GM12878 (cell line): ENCODE measurements at regions of chr11 and their contacts with region 1.

Region 1: DNA sequence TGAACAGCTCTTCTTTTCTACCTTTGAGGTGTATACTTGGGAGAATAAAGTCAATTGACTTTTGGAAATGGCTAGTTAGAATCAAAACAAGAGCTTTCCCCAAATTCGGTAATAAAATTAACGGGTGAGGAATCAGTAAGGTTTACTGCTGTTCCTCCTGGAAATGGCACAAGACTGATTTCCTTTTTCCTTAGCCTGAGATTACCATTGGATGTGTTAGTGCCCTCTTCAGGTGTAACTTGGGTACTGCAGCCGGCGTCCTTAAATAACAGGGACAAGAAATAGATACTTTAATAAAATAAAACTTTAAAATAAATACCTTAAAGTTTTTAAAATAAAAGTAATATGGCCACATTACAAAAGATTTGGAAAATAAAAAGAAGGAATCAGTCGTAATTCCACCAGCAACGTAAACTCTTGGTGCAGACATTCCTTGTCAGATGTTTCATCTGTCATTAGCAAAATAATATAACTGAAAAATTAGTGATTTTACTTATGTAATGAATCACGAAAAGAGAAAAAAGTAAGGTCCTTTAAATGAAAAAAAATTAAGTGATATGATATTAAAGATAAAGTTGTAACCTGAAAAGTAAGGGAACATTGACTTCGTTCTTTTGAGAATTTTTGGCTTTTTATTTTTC is 29.7 kb downstream of the ZFTA start:
- DNase-seq: peak; percentile 19
- ATAC-seq: peak; percentile 42; the same call in 2 of the 3 replicates
- H3K4me3 ChIP-seq: no peak overlapping the region
- H3K27ac ChIP-seq: no peak overlapping the region
- H3K4me1 ChIP-seq: no peaks in the 10 kb centered on the region
- H3K27me3 ChIP-seq: no peaks in the 10 kb centered on the region
- CTCF ChIP-seq: peak; percentile 81 to 90 (median 87)
- EP300 ChIP-seq: no peak
- POLR2A ChIP-seq: no peak
- RAD21 ChIP-seq: peak; percentile 73

Region 2: DNA sequence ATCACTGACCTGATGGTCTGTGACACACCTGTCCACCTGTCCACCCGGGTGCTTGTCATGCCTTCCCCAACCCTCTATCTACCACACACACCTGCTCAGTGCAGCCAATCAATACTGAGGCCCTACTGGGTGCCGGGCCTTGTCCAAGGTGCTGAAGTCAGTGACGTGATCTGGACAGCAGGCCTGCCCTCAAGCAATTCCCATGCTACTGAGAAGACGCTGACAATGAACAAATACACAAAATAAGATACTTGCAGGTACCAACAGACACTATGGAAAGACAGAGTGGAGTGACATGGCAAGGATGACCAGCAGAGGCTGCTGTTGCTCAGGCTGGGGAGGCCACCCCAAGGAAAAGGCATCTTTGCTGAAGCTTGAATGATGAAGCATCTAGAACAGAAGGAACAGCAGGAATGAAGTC is 145.9 kb before region 1 on chr11:
- CTCF ChIA-PET with region 1: interaction called, 6 read pairs
- POLR2A ChIA-PET with region 1: no interaction called
- RAD21 ChIA-PET with region 1: interaction called, 3 read pairs
- SMC1A ChIA-PET with region 1: interaction called, 4 read pairs
- in situ Hi-C with region 1: no loop called
- intact Hi-C with region 1: loop called (anchors 5 kb)
- DNase-seq: no peak
- ATAC-seq: peak; percentile 69
- H3K4me3 ChIP-seq: no peak overlapping the region
- H3K27ac ChIP-seq: no peak overlapping the region
- H3K4me1 ChIP-seq: no peaks in the 10 kb centered on the region
- H3K27me3 ChIP-seq: no peaks in the 10 kb centered on the region
- CTCF ChIP-seq: peak; percentile 66 to 79 (median 75)
- EP300 ChIP-seq: no peak
- POLR2A ChIP-seq: no peak
- RAD21 ChIP-seq: peak; percentile 70

Region 3: DNA sequence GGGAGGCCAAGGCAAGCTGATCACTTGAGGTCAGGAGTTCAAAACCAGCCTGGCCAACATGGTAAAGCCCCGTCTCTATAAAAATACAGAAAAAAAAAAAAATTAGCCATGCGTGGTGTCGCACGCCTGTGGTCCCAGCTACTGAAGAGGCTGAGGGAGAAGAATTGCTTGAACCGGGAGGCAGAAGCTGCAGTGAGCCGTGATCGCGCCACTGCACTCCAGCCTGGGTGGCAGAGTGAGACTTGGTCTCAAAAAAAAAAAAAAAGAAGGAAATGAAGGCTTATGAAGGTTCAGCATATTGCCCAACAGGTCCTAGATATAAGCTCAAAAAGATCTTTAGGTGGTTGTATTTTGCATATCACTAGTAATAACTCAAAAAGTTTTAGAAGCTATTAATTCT is 77.9 kb before region 1 on chr11:
- CTCF ChIA-PET with region 1: interaction called, 11 read pairs
- POLR2A ChIA-PET with region 1: no interaction called
- RAD21 ChIA-PET with region 1: interaction called, 6 read pairs
- SMC1A ChIA-PET with region 1: interaction called, 9 read pairs
- in situ Hi-C with region 1: no loop called
- intact Hi-C with region 1: no loop called
- DNase-seq: no peak
- ATAC-seq: peak; percentile 57
- H3K4me3 ChIP-seq: no peak overlapping the region
- H3K27ac ChIP-seq: peak overlapping the region; percentile 14; the same call in 1 of the 2 replicates
- H3K4me1 ChIP-seq: peaks cover 5% of the 10 kb centered on the region
- H3K27me3 ChIP-seq: no peaks in the 10 kb centered on the region
- CTCF ChIP-seq: no peak
- EP300 ChIP-seq: no peak
- POLR2A ChIP-seq: no peak
- RAD21 ChIP-seq: no peak

Region 4: GRCh38 chr11:63681321-63682049 is 57.4 kb before region 1 on chr11 and contains the start of gene RTN3:
- CTCF ChIA-PET with region 1: interaction called, 11 read pairs
- POLR2A ChIA-PET with region 1: no interaction called
- RAD21 ChIA-PET with region 1: interaction called, 7 read pairs
- SMC1A ChIA-PET with region 1: interaction called, 5 read pairs
- in situ Hi-C with region 1: no loop called
- intact Hi-C with region 1: no loop called
- DNase-seq: peak; percentile 96
- ATAC-seq: peak; percentile 94
- H3K4me3 ChIP-seq: peak within 1 kb of the TSS; percentile 82
- H3K27ac ChIP-seq: peak within 1 kb of the TSS; percentile 76
- H3K4me1 ChIP-seq: peaks cover 10% of the 10 kb centered on the region
- H3K27me3 ChIP-seq: no peaks in the 10 kb centered on the region
- CTCF ChIP-seq: 0 out of 6 replicates have a peak, but pooled peaks of 1 of the 3 experiments have one; percentile 2
- EP300 ChIP-seq: no peak; a peak in 1 of 4 replicates
- POLR2A ChIP-seq: peak; percentile 90
- RAD21 ChIP-seq: no peak
- polyA plus RNA-seq, gene RTN3: 22.9 to 27.3 TPM

Region 5: GRCh38 chr11:63719977-63720376 is 18.9 kb before region 1 on chr11:
- CTCF ChIA-PET with region 1: interaction called, 30 read pairs
- POLR2A ChIA-PET with region 1: interaction called, 3 read pairs
- RAD21 ChIA-PET with region 1: no interaction called
- SMC1A ChIA-PET with region 1: interaction called, 5 read pairs
- in situ Hi-C with region 1: no loop called
- intact Hi-C with region 1: no loop called
- DNase-seq: no peak
- ATAC-seq: no peak
- H3K4me3 ChIP-seq: no peak overlapping the region
- H3K27ac ChIP-seq: no peak overlapping the region
- H3K4me1 ChIP-seq: no peaks in the 10 kb centered on the region
- H3K27me3 ChIP-seq: no peaks in the 10 kb centered on the region
- CTCF ChIP-seq: no peak
- EP300 ChIP-seq: no peak
- POLR2A ChIP-seq: no peak
- RAD21 ChIP-seq: no peak

Region 6: GRCh38 chr11:63791495-63792167 is 52.8 kb after region 1 on chr11:
- CTCF ChIA-PET with region 1: no interaction called
- POLR2A ChIA-PET with region 1: no interaction called
- RAD21 ChIA-PET with region 1: no interaction called
- SMC1A ChIA-PET with region 1: no interaction called
- in situ Hi-C with region 1: no loop called
- intact Hi-C with region 1: no loop called
- DNase-seq: no peak
- ATAC-seq: no peak
- H3K4me3 ChIP-seq: no peak overlapping the region
- H3K27ac ChIP-seq: no peak overlapping the region
- H3K4me1 ChIP-seq: no peaks in the 10 kb centered on the region
- H3K27me3 ChIP-seq: no peaks in the 10 kb centered on the region
- CTCF ChIP-seq: no peak
- EP300 ChIP-seq: no peak
- POLR2A ChIP-seq: no peak
- RAD21 ChIP-seq: no peak